PC-3 (cell line): ENCODE measurements at regions of chr12 and their contacts with region 1.

Region 1: GRCh38 chr12:6285063-6285477 is 25.4 kb upstream of the PLEKHG6 start:
- DNase-seq: peak; percentile 72
- ATAC-seq: peak; percentile 34
- H3K4me3 ChIP-seq: no peak overlapping the region
- H3K27ac ChIP-seq: peak overlapping the region; percentile 96
- H3K4me1 ChIP-seq: peaks cover 49% of the 10 kb centered on the region
- H3K27me3 ChIP-seq: no peaks in the 10 kb centered on the region
- CTCF ChIP-seq: peak; percentile 85

Region 2: DNA sequence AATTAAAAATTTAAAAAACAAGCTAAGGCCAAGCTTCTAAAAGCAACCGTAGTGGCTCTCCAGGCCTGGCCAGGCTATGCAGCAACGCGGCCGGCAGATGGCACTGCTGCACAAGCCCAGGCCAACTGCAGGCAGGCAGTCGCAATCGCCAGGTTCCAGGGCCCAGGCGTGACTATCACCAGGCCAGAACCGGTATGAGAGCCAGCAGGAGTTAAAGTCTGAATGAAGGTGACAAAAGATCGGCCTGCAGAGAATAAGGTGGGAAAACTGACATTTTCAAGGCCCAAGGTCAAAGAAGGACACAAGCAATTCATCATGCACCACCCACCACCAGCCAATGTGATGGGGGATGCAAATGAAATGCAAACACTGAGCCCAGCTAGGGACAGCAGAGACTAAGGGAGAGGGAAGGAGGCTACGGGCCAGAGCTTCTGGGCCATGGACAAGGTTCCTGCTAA is 296.4 kb before region 1 on chr12:
- CTCF ChIA-PET with region 1: no interaction called
- POLR2A ChIA-PET with region 1: no interaction called
- intact Hi-C with region 1: loop called (anchors 5 kb)
- DNase-seq: peak; percentile 74
- ATAC-seq: peak; percentile 99
- H3K4me3 ChIP-seq: no peak overlapping the region
- H3K27ac ChIP-seq: no peak overlapping the region
- H3K4me1 ChIP-seq: 0 out of 2 replicates have a peak, but pooled peaks cover 5% of the 10 kb centered on the region
- H3K27me3 ChIP-seq: peaks cover 9% of the 10 kb centered on the region
- CTCF ChIP-seq: peak; percentile 93

Region 3: GRCh38 chr12:6062757-6063735 is 222.0 kb before region 1 on chr12:
- CTCF ChIA-PET with region 1: interaction called, 7 read pairs
- POLR2A ChIA-PET with region 1: no interaction called
- intact Hi-C with region 1: loop called (anchors 1 kb)
- DNase-seq: peak; percentile 56
- ATAC-seq: peak; percentile 75
- H3K4me3 ChIP-seq: no peak overlapping the region
- H3K27ac ChIP-seq: no peak overlapping the region
- H3K4me1 ChIP-seq: no peaks in the 10 kb centered on the region
- H3K27me3 ChIP-seq: no peaks in the 10 kb centered on the region
- CTCF ChIP-seq: peak; percentile 81

Region 4: DNA sequence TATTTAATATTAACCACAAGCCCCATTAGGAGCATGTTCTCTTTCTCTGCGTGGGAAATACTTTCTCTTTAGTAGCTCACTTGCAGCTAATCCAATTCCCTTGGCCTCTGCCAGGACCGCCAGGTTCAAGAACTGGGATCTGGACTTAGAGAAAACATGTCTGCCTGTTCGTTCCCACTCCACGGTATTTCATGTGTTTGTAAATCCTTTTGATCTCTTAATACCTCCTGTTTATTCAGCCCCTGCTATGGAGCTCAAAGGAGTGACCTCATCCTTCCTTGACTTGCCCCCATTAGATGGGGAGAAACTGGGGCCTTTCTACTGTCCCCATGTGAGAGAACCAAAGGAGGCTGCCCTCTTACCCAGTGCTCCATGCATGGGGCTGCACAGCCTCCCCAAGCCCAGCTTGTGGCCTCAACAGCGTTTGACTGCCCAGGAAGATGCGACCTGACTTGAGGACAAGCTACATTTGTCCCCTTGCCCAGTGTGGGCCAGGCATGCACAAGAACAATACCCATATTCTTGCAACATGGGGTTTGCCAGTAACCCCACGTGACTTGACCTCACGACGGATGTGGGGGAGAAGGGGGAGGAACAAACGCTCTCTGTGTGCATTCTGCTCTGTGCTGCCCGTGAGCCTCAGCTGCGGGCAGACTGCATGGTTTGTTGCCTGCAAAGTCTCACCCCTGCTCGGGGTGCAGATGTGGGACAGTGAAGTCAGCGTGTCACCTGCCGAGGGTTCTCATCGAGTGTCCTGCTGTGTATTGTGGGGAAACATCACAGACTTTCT is 54.6 kb before region 1 on chr12:
- CTCF ChIA-PET with region 1: interaction called, 15 read pairs
- POLR2A ChIA-PET with region 1: interaction called, 7 read pairs
- intact Hi-C with region 1: loop called (anchors 1 kb)
- DNase-seq: peak; percentile 47
- ATAC-seq: no peak; the same call in 1 of the 2 replicates
- H3K4me3 ChIP-seq: peak overlapping the region; percentile 52; the same call in 1 of the 2 replicates
- H3K27ac ChIP-seq: peak overlapping the region; percentile 99
- H3K4me1 ChIP-seq: peaks cover 65% of the 10 kb centered on the region
- H3K27me3 ChIP-seq: no peaks in the 10 kb centered on the region
- CTCF ChIP-seq: no peak

Region 5: DNA sequence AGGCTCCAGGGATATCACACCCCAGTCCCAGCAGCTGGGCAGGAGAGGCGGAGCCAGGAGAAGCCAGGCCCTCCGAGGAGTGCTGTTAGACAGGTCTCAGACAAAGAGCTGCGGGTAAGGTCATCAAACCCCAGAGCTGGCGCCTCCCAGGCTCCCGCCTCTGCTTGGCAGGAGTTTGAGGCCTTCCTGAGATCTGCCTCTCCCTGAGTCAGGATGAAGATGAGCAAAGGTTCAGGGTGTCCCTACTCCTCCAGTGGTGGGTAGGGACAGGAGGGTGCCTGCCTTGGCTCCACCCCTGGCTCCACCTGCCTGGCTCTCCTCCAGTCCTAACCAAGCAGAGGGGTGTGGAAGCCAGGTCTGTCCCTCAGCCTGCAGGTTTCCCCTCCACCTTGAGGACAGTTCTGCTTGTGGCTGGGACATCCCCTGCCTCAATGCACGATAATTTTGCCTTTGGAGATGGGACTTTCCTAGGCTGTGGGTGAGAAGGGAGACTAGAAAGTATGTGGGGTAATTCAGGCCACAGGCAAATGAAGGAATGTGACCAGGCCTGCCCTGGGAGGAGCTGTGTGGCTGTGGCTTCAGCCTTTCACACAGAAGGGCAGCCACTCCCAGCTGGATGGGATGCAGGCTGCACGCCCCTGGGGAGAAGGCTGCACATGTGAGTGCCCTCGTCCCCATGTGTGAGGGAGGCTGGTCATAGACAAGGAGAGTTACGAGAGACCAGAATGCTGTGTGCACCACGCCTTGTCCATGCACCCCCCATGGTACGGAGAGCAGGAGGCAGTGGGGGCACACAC is 27.7 kb after region 1 on chr12:
- CTCF ChIA-PET with region 1: interaction called, 13 read pairs
- POLR2A ChIA-PET with region 1: interaction called, 5 read pairs
- intact Hi-C with region 1: no loop called
- DNase-seq: peak; percentile 71
- ATAC-seq: peak; percentile 69
- H3K4me3 ChIP-seq: peak overlapping the region; percentile 7; the same call in 1 of the 2 replicates
- H3K27ac ChIP-seq: peak overlapping the region; percentile 90
- H3K4me1 ChIP-seq: peaks cover 28% of the 10 kb centered on the region
- H3K27me3 ChIP-seq: no peaks in the 10 kb centered on the region
- CTCF ChIP-seq: no peak

Region 6: DNA sequence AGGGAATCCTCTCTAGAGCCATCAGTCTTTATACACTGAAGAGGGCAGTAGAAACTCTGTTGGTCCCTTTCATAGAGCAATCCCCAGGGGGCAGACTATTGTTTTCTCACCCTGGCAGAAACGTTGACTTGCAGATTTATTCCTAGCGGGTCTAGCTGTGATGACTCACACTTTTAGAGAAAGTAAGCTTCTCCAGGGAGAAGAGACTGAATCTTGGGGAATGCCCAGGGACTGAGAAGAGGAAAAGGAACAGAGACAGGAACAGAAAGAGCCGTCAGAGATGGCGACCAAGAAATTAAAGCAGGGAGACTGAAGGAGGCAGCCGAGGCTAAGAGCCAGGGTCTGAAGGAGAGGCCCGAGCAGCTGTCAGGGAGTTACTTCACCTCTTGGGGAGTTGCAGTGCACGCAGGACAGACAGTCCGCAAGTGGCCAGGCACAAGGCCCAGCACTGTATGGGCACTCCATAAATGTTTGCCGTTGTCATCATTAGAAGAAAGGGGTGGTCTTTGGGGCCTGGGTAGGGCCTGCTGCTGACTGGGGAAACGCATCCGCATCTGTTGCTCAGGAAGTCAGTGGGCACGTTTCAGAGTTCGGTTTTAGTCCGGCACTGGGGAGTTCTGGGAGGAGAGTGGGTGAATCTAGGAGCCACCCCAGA is 38.4 kb after region 1 on chr12:
- CTCF ChIA-PET with region 1: no interaction called
- POLR2A ChIA-PET with region 1: interaction called, 9 read pairs
- intact Hi-C with region 1: loop called (anchors 5 kb)
- DNase-seq: peak; percentile 86
- ATAC-seq: peak; percentile 53
- H3K4me3 ChIP-seq: no peak overlapping the region
- H3K27ac ChIP-seq: peak overlapping the region; percentile 62
- H3K4me1 ChIP-seq: peaks cover 23% of the 10 kb centered on the region
- H3K27me3 ChIP-seq: no peaks in the 10 kb centered on the region
- CTCF ChIP-seq: peak; percentile 81

Region 7: GRCh38 chr12:6335451-6336078 is 50.5 kb after region 1 on chr12:
- CTCF ChIA-PET with region 1: no interaction called
- POLR2A ChIA-PET with region 1: no interaction called
- intact Hi-C with region 1: no loop called
- DNase-seq: peak; percentile 75
- ATAC-seq: peak; percentile 27
- H3K4me3 ChIP-seq: peak overlapping the region; percentile 43; the same call in 1 of the 2 replicates
- H3K27ac ChIP-seq: peak overlapping the region; percentile 100
- H3K4me1 ChIP-seq: peaks cover 73% of the 10 kb centered on the region
- H3K27me3 ChIP-seq: no peaks in the 10 kb centered on the region
- CTCF ChIP-seq: peak; percentile 63